Motor neuron (in vitro differentiated cells): ENCODE measurements at regions of chr13 and their contacts with region 1.

Region 1: GRCh38 chr13:23888658-23889614 is at the start of gene MIPEP:
- ATAC-seq: peak; percentile 81 to 97 (median 94)
- H3K4me3 ChIP-seq: peak within 1 kb of the TSS; percentile 49 to 94 (median 63)
- H3K27ac ChIP-seq: peak within 1 kb of the TSS; percentile 46 to 57
- H3K4me1 ChIP-seq: peaks cover 5 to 6% of the 10 kb centered on the region in 2 donors
- total RNA-seq, gene MIPEP: 5.9 to 26.5 (median 14.8) TPM

Region 2: GRCh38 chr13:23466144-23467002 is 422.6 kb before region 1 on chr13:
- in situ Hi-C with region 1: loop called in 3 of 9 experiments (anchors 25 kb)
- ATAC-seq: peak; percentile 81 to 96 (median 90)
- H3K4me3 ChIP-seq: peak overlapping the region; percentile 26 to 41 (median 37)
- H3K27ac ChIP-seq: peak overlapping the region; percentile 1 to 53
- H3K4me1 ChIP-seq: peaks cover 17 to 21% of the 10 kb centered on the region in 2 donors